Adrenal gland (tissue), 19 donors: ENCODE measurements at regions of chr7 and their contacts with region 1.

Region 1: DNA sequence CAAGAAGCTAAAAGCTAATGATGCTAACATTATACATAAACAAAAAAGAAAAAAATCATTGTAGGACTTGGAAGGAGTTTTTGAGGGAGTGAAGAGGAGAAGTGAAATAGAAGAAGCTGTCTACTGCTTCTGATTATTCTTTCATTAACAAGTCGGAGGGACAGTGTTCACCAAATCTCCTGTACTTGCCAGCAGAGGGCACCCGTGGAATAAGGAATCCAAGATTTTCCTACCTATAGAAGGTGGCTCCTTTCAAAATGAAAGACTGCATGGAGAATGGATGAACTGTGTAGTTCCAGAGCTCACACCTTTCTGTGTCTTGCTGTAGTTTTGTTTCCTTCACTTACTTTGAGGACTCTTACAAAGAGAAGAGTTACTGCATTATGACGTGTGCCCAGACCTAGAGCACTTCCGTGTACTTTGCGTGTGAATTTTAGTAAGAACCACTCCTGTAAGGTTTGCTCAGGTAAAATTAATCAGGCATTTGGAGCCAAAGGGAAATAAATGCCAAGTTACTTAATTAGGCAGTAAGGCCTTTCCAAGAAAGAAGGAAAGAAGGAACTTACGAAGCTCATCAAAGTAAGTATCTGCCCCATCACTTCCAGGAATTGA is 145.1 kb downstream of the SEMA3D start:
- DNase-seq: peak; percentile 55 to 87 (median 71)
- H3K4me3 ChIP-seq: no peak overlapping the region
- H3K27ac ChIP-seq: no peak overlapping the region
- H3K4me1 ChIP-seq: no peaks in the 10 kb centered on the region
- H3K27me3 ChIP-seq: no peaks in the 10 kb centered on the region
- CTCF ChIP-seq: peak; percentile 33 to 80 (median 69)
- POLR2A ChIP-seq: no peak

Region 2: DNA sequence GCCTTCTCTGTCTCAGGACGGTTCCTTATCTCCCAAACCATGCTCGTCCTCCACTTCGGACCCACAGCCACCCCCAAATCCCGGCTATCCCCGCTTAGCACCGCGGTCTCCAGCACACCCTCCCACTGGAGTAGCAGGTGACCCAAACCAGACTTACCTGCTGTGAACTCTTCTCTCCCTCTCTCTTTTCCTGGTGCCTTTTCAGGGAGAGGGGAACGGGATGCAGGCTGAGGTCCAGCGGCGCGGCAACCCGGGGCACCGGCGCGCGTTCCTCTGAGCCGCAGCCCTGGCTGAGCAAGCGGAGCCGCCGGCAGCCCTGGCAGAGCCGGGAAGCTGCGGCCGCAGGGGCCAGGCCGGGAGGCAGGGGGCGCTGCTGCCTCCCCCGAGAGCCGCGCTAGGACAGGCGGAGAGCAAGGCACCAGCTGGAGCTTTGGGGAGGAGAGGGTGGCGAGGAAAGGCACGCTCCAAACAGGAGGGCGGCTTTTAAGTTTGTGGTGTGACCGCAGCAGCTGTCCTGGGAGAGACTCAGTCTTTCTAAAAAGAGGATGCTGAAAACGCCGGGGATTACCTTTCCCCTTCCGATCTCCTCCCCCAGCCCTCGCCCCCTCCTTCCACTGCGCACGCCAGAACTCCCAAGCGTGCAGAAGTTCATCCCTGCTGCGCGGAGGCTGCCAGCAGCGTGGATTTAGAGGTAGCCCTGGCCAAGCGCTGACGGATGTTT is 145.0 kb after region 1 on chr7 and contains the start of gene SEMA3D:
- intact Hi-C with region 1: loop called in 1 of 2 experiments (anchors 10 kb)
- DNase-seq: peak; percentile 58 to 76 (median 73)
- H3K4me3 ChIP-seq: peak within 1 kb of the TSS in 1 of 4 donors; percentile 56
- H3K27ac ChIP-seq: peak within 1 kb of the TSS in 4 of 5 donors; percentile 27 to 82 (median 54)
- H3K4me1 ChIP-seq: no peaks in the 10 kb centered on the region
- H3K27me3 ChIP-seq: peaks cover 11% of the 10 kb centered on the region
- CTCF ChIP-seq: peak; percentile 36 to 73 (median 61)
- POLR2A ChIP-seq: peak in 1 of 2 donors; percentile 1
- total RNA-seq, gene SEMA3D: 4.1 to 9.3 (median 7.1) TPM

Region 3: DNA sequence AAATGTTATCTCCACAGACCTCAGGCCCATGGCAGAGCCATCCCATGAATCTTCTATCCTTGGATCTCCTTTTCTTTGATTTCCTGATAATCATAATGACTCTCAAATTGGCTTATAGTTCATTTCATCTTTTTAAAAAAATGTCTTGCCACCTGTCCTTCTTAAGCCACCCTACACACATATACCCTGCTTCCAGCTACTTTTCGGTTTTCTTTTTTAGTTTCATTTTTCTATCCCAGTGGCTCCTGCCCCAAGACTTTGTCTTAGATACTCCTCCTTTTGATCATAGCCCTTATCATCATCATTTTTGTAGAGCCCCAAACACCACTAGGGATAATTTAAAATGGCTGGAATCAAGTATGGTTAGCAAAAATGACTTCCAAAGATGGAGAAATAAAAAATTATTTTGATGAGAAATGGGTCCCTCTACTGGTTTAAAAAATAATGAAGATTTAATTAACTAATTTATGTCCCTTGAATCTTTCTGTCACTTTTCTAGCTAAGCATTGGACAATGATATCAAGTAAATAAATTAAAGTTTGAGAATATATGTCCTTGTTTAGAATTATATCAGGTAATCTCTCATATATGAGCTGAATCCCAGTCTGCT is 422.4 kb after region 1 on chr7:
- intact Hi-C with region 1: loop called in 1 of 2 experiments (anchors 10 kb)
- DNase-seq: no peak
- H3K4me3 ChIP-seq: no peak overlapping the region
- H3K27ac ChIP-seq: no peak overlapping the region
- H3K4me1 ChIP-seq: no peaks in the 10 kb centered on the region
- H3K27me3 ChIP-seq: no peaks in the 10 kb centered on the region
- CTCF ChIP-seq: peak in 4 of 6 experiments; percentile 13 to 39 (median 30)
- POLR2A ChIP-seq: no peak

Region 4: GRCh38 chr7:85554236-85555178 is 512.8 kb after region 1 on chr7:
- intact Hi-C with region 1: loop called (anchors 5 to 10 kb)
- DNase-seq: peak in 6 of 7 donors; percentile 14 to 46 (median 33)
- H3K4me3 ChIP-seq: no peak overlapping the region
- H3K27ac ChIP-seq: peak overlapping the region in 4 of 5 donors; percentile 11 to 61 (median 38)
- H3K4me1 ChIP-seq: peaks cover 5 to 12% of the 10 kb centered on the region in 2 donors
- H3K27me3 ChIP-seq: no peaks in the 10 kb centered on the region
- CTCF ChIP-seq: peak; percentile 67 to 84 (median 78)
- POLR2A ChIP-seq: no peak

Region 5: DNA sequence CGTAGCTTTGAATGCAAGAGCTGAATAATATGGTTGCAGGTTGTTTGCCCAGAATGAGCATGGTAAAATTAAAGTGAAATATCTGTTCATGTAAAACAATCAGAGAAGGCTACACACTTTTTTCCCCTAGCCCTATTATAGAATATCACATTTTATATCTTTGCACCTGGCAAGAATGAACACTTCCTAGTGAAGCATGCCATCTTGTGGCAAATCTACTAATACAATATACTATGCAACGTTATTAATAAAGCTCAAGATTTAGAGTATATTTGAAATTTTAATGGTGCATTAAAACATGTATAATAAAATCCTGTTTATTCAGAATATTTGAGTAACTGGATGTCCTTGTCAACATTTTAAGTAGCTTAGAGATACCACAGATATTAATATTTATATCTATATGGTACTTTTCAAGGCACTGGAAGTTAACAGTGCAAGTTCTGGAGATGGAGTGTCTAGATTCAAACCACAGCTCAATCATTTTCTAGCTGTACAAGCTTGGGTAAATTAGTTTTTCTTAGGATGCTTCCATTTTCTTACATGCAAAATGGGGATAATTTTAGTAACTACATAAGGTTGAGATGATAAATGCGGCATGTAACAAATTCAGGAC is 788.2 kb after region 1 on chr7:
- intact Hi-C with region 1: loop called in 1 of 2 experiments (anchors 5 kb)
- DNase-seq: no peak
- H3K4me3 ChIP-seq: no peak overlapping the region
- H3K27ac ChIP-seq: no peak overlapping the region
- H3K4me1 ChIP-seq: no peaks in the 10 kb centered on the region
- H3K27me3 ChIP-seq: no peaks in the 10 kb centered on the region
- CTCF ChIP-seq: peak in 5 of 6 experiments; percentile 27 to 56 (median 39)
- POLR2A ChIP-seq: no peak

Region 6: GRCh38 chr7:85851571-85852193 is 810.0 kb after region 1 on chr7:
- intact Hi-C with region 1: loop called in 1 of 2 experiments (anchors 10 kb)
- DNase-seq: no peak
- H3K4me3 ChIP-seq: no peak overlapping the region
- H3K27ac ChIP-seq: no peak overlapping the region
- H3K4me1 ChIP-seq: no peaks in the 10 kb centered on the region
- H3K27me3 ChIP-seq: no peaks in the 10 kb centered on the region
- CTCF ChIP-seq: peak in 5 of 6 experiments; percentile 23 to 60 (median 42)
- POLR2A ChIP-seq: no peak